Activated naive CD4-positive, alpha-beta T cell treated with anti-CD3 and anti-CD28 coated beads, Interleukin-2, amount 10 ng/mL, durations not matched to agents 7 days and 5 days (primary cell): ENCODE measurements at regions of chr1 and their contacts with region 1.

Region 1: DNA sequence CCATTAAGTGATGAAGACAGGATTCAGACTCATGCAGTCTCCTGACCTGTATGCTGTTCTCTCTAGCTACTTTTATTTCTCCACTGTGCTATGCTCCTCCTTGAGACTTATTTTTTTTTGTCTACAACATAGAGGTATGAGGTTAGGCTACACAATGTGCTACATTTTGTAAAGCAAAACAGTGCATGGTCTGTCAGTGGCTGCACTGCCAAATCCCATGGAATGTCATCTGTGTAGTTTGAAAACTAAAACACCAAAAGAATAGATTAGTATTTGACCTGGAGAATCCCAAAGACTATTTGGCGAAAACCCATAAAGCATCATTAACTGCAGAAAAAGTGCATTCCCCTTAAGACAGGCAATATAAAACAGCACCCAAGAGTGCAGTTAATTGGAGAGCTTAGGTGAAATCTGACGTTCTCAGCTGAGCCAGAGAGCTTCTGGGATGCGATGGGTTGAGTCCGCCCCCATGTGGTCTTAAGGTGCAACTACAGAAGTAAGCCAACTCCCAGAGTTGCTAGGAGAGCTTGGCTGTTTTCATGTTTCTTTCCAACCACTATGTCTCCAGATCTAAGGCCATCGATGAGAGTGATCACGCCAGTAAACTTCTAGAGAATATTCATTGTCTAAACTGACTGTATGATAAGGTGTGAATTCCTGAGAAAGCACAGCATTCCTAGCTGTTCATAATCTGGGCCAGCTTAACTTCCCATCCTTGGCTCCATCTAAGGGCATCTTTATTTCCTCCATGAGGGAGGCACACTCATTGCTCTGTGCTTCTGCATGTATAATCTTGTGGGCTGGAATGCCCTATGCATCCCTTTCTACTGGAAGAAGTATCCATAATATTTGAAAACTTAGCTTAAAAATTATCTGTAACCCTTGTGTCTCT is 20.7 kb upstream of the CYP2J2 start:
- DNase-seq: peak; percentile 66
- H3K4me3 Mint-ChIP-seq: no peak overlapping the region
- H3K27ac Mint-ChIP-seq: no peak overlapping the region
- H3K4me1 Mint-ChIP-seq: no peaks in the 10 kb centered on the region
- H3K27me3 Mint-ChIP-seq: peaks cover 13% of the 10 kb centered on the region

Region 2: DNA sequence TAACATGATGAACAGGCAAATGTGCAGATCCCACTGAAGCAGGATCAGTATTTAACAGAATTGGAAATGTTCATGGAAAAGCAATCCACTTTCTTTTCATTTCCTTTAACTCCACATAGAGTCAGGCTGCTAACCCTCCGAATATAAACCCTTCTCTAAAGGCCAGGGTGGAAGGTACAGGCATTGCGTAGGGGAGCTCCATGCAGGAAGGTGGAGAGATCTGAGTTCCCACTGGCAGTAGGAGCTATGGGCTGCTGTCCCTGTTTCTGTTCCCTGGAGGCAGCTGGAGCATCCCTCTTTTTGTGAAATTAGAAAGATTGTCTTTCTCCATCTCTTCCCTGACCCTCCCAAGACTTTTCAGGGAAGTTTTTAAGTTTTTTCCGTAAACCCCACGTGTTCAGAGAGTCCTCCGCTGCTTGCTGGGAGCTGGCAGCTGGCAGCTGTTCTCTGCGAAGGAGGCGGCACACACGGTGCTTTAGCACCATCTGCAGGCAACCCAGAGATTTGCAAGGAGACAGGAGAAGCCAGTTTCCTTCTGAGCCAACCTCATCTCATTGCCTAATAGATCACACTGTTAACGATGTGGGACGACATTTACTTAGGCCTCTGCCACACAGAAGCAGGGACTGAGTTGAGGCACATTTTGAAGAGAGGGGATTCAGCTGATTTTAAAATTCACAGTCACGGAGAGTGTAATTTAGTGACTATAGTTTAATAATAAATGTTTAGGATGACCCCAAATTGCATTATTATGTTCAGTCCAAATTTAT is 188.0 kb before region 1 on chr1:
- CTCF ChIA-PET with region 1: interaction called, 10 read pairs
- DNase-seq: peak; percentile 79
- H3K4me3 Mint-ChIP-seq: no peak overlapping the region
- H3K27ac Mint-ChIP-seq: no peak overlapping the region
- H3K4me1 Mint-ChIP-seq: peaks cover 9% of the 10 kb centered on the region
- H3K27me3 Mint-ChIP-seq: peaks cover 4% of the 10 kb centered on the region

Region 3: GRCh38 chr1:59879574-59879973 is 67.7 kb before region 1 on chr1:
- CTCF ChIA-PET with region 1: interaction called, 81 read pairs
- DNase-seq: peak; percentile 72
- H3K4me3 Mint-ChIP-seq: no peak overlapping the region
- H3K27ac Mint-ChIP-seq: no peak overlapping the region
- H3K4me1 Mint-ChIP-seq: no peaks in the 10 kb centered on the region
- H3K27me3 Mint-ChIP-seq: no peaks in the 10 kb centered on the region

Region 4: GRCh38 chr1:59885160-59885832 is 62.0 kb before region 1 on chr1:
- CTCF ChIA-PET with region 1: interaction called, 81 read pairs
- DNase-seq: no peak
- H3K4me3 Mint-ChIP-seq: no peak overlapping the region
- H3K27ac Mint-ChIP-seq: no peak overlapping the region
- H3K4me1 Mint-ChIP-seq: no peaks in the 10 kb centered on the region
- H3K27me3 Mint-ChIP-seq: peaks cover 9% of the 10 kb centered on the region

Region 5: GRCh38 chr1:59892841-59893811 is 54.2 kb before region 1 on chr1:
- CTCF ChIA-PET with region 1: interaction called, 19 read pairs
- DNase-seq: no peak
- H3K4me3 Mint-ChIP-seq: peak overlapping the region; percentile 26
- H3K27ac Mint-ChIP-seq: peak overlapping the region; percentile 87
- H3K4me1 Mint-ChIP-seq: peaks cover 17% of the 10 kb centered on the region
- H3K27me3 Mint-ChIP-seq: peaks cover 9% of the 10 kb centered on the region

Region 6: DNA sequence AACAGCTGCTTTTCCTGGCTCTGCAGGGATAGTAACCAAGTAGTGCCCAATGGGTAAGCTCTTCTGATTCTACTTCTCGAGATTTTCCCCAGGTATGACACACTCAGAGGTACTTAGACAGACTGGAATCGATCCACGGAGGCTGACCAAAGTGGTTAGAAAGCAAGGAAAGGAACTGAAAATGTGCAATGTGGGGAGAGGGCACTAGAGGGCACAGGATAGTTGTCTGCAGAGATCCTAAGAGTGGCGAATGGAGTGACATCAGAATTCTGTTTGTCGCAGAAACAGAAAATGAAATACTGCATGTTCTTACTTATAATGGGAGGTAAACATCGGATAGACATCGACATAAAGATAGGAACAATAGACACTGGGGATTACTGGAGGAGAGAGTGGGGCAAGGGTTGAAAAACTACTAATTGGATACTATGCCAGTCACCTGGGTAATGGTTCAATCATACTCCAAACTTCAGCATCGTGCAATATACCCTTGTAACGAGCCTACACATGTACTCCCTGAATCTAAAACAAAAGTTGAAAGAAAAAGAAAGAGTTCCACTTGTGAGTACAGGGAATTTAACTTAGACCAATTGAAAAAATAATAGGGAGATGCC is 44.0 kb before region 1 on chr1:
- CTCF ChIA-PET with region 1: interaction called, 53 read pairs
- DNase-seq: peak; percentile 51
- H3K4me3 Mint-ChIP-seq: no peak overlapping the region
- H3K27ac Mint-ChIP-seq: no peak overlapping the region
- H3K4me1 Mint-ChIP-seq: peaks cover 5% of the 10 kb centered on the region
- H3K27me3 Mint-ChIP-seq: no peaks in the 10 kb centered on the region

Region 7: DNA sequence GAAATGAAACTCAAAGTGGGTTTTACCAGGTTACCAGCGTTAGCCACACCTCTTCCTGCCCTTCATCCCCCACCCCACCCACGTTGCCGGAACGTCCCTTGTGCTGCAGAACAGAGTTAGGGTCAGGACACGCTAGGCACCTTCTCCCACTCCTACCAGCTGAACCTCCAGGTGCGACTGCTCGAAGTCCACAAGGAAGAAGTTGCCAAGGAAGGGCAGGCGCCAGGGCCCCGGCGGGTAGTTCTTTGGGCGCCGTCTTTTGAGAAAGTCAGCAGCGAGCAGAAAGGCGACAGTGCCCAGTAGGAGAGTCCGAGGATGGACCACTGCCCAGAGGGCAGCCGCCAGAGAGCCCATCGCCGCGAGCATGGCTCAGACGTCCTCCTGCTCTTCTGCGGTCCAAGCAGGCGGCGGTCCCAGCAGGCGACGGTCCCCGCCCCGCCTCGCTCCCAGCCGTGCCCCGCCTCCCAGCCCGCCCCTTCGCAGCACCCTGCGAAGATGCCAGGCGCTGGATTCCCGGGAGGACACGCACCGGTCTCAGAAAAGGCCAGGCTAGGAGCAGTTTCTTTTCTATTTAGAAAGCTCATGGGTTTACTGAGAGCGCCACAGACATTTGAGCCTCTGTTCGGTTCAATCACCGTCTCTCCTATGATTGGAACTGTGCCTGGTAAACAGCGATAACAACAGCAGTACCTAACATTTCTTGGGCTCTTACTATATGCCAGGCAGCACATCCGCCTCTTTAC is 20.7 kb before region 1 on chr1 and contains the start of gene CYP2J2:
- CTCF ChIA-PET with region 1: interaction called, 12 read pairs
- DNase-seq: peak; percentile 60
- H3K4me3 Mint-ChIP-seq: peak within 1 kb of the TSS; percentile 82
- H3K27ac Mint-ChIP-seq: no peak within 1 kb of the TSS
- H3K4me1 Mint-ChIP-seq: peaks cover 18% of the 10 kb centered on the region
- H3K27me3 Mint-ChIP-seq: peaks cover 36% of the 10 kb centered on the region

Region 8: GRCh38 chr1:60055336-60055735 is 108.0 kb after region 1 on chr1:
- CTCF ChIA-PET with region 1: no interaction called
- DNase-seq: no peak
- H3K4me3 Mint-ChIP-seq: no peak overlapping the region
- H3K27ac Mint-ChIP-seq: no peak overlapping the region
- H3K4me1 Mint-ChIP-seq: no peaks in the 10 kb centered on the region
- H3K27me3 Mint-ChIP-seq: no peaks in the 10 kb centered on the region

Region 9: GRCh38 chr1:60118085-60118484 is 170.8 kb after region 1 on chr1:
- CTCF ChIA-PET with region 1: no interaction called
- DNase-seq: no peak
- H3K4me3 Mint-ChIP-seq: no peak overlapping the region
- H3K27ac Mint-ChIP-seq: no peak overlapping the region
- H3K4me1 Mint-ChIP-seq: no peaks in the 10 kb centered on the region
- H3K27me3 Mint-ChIP-seq: no peaks in the 10 kb centered on the region